ENCODE measurements at regions of chr16 and their contacts with region 1.

Region 1: GRCh38 chr16:69848637-69849545 is 86.8 kb downstream of the WWP2 start:
- DNase-seq: peak; percentile 94
- H3K4me3 ChIP-seq: peak overlapping the region in 1 of 3 experiments; percentile 33
- H3K27ac ChIP-seq: peak overlapping the region; percentile 65
- H3K4me1 ChIP-seq: peaks cover 10% of the 10 kb centered on the region
- H3K27me3 ChIP-seq: no peaks in the 10 kb centered on the region
- CTCF ChIP-seq: no peak
- POLR2A ChIP-seq: no peak

Region 2: GRCh38 chr16:69747115-69747514 is 101.8 kb before region 1 on chr16:
- CTCF ChIA-PET with region 1: no interaction called
- POLR2A ChIA-PET with region 1: no interaction called
- dilution Hi-C with region 1: no loop called
- intact Hi-C with region 1: no loop called
- DNase-seq: no peak
- H3K4me3 ChIP-seq: no peak overlapping the region
- H3K27ac ChIP-seq: no peak overlapping the region
- H3K4me1 ChIP-seq: no peaks in the 10 kb centered on the region
- H3K27me3 ChIP-seq: no peaks in the 10 kb centered on the region
- CTCF ChIP-seq: no peak
- POLR2A ChIP-seq: no peak

Region 3: DNA sequence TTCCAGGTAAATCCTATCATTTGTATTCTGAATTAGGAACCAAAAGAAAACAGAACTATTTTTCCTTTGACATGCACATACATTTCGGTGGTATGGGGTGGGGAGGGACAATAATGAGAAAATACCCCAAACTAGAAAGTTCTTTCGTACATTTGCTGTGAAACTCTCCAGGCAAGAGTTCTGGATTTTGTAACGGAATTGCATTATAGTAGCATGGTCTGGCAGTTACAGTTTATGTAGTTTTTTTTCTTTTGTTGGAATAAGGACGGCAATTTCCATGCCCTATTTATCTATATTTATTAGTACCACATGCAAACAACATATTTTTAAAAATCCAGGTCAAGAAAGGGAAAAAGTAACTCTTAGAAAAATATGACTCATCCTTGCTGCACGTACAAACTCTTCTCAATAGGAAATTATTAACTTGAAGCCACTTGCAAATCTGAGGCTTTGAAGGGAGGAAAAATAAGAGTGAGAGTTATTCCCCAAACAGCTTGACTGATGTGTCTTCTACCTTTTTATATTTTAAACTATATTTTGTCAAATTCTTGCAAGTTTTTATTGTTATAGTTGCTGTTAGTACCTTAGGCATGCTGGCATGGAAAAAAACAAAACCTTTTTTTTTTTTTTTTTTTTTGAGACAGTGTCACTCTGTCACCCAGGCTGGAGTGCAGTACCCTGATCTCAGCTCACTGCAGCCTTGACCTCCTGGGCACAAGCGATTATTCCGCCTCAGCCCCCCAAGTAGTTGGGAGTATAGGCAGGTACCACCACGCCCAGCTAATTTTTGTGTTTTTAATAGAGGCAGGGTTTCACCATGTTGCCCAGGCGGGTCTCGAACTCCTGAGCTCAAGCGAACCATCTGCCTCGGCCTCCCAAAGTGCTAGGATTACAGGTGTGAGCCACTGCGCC is 17.4 kb before region 1 on chr16:
- CTCF ChIA-PET with region 1: interaction called, 3 read pairs
- POLR2A ChIA-PET with region 1: no interaction called
- dilution Hi-C with region 1: no loop called
- intact Hi-C with region 1: loop called (anchors 2 kb)
- DNase-seq: peak; percentile 66
- H3K4me3 ChIP-seq: no peak overlapping the region
- H3K27ac ChIP-seq: no peak overlapping the region
- H3K4me1 ChIP-seq: peaks cover 10% of the 10 kb centered on the region
- H3K27me3 ChIP-seq: no peaks in the 10 kb centered on the region
- CTCF ChIP-seq: no peak
- POLR2A ChIP-seq: no peak

Region 4: GRCh38 chr16:69859105-69859989 is 10.5 kb after region 1 on chr16:
- CTCF ChIA-PET with region 1: interaction called, 30 read pairs
- POLR2A ChIA-PET with region 1: no interaction called
- dilution Hi-C with region 1: no loop called
- intact Hi-C with region 1: no loop called
- DNase-seq: peak; percentile 40
- H3K4me3 ChIP-seq: no peak overlapping the region
- H3K27ac ChIP-seq: no peak overlapping the region
- H3K4me1 ChIP-seq: peaks cover 11% of the 10 kb centered on the region
- H3K27me3 ChIP-seq: no peaks in the 10 kb centered on the region
- CTCF ChIP-seq: peak in 1 of 2 donors; percentile 41
- POLR2A ChIP-seq: no peak

Region 5: GRCh38 chr16:69906838-69907401 is 58.0 kb after region 1 on chr16:
- CTCF ChIA-PET with region 1: interaction called, 3 read pairs
- POLR2A ChIA-PET with region 1: no interaction called
- dilution Hi-C with region 1: no loop called
- intact Hi-C with region 1: loop called (anchors 5 kb)
- DNase-seq: no peak
- H3K4me3 ChIP-seq: no peak overlapping the region
- H3K27ac ChIP-seq: no peak overlapping the region
- H3K4me1 ChIP-seq: no peaks in the 10 kb centered on the region
- H3K27me3 ChIP-seq: no peaks in the 10 kb centered on the region
- CTCF ChIP-seq: no peak
- POLR2A ChIP-seq: no peak

Region 6: DNA sequence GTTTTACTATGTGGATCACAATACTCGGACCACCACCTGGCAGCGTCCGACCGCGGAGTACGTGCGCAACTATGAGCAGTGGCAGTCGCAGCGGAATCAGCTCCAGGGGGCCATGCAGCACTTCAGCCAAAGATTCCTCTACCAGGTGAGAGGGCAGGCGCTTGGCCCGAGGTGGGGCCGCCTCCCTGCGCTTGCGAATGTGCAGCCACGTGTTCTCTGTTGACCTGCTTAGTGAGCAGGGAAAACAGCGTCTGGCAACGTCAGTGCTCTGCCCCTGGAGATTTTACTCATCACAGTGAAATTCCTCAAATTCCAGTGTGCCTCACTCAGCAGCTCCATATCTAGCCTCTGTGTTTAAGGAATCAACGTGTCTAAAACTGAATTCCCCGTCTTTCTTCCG is 68.8 kb after region 1 on chr16:
- CTCF ChIA-PET with region 1: no interaction called
- POLR2A ChIA-PET with region 1: interaction called, 3 read pairs
- dilution Hi-C with region 1: no loop called
- intact Hi-C with region 1: loop called (anchors 5 kb)
- DNase-seq: peak; percentile 74
- H3K4me3 ChIP-seq: no peak overlapping the region
- H3K27ac ChIP-seq: peak overlapping the region; percentile 68
- H3K4me1 ChIP-seq: peaks cover 11% of the 10 kb centered on the region
- H3K27me3 ChIP-seq: no peaks in the 10 kb centered on the region
- CTCF ChIP-seq: no peak
- POLR2A ChIP-seq: no peak